Naive thymus-derived CD4-positive, alpha-beta T cell (primary cell): ENCODE measurements at regions of chr1 and their contacts with region 1.

Region 1: DNA sequence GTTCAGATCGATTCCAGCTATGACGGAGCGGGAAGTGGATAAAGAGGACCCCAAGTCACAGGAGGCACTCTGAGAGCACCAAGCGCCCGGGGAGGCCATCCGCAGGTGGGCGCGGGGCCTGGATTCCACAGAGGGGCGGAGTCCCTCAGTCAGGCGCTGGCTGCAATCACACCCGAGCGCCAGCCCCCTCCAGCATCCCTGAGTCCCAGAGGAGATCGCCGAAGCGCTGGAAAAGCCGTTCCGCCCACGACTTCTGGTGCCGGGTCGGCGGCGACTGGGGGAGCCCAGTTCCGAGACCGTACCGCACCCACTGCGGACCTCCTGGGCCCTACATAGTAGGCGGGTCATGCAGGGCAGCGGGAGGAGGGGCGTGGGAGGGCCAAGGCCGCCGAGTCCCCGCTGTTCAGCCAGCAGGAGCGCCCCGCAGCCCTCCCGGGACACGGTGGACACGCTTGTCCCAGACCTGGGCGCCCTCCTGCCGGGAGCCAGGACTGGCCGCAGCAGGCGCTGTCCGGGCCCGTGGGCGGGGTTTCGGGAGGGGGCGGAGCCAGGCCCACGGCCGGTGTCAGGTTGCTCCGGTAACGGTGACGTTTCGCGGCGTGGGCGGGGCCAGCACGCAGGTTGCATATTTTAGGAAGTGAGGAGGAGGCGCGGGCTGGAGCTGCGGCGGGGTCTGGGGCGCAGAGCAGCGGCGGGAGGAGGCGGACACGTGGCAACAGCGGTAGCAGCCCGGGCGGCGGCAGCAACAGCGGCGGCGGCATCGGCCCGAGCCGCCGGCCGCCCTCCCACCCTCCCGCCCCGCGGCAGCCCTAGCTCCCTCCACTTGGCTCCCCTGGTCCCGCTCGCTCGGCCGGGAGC is at the start of gene ATP1A1:
- DNase-seq: peak; percentile 94 to 99 (median 96)
- ATAC-seq: peak; percentile 89
- H3K4me3 ChIP-seq: peak within 1 kb of the TSS; percentile 94
- H3K4me3 Mint-ChIP-seq: peak within 1 kb of the TSS; percentile 91 to 99 (median 98)
- H3K27ac ChIP-seq: peak within 1 kb of the TSS; percentile 98
- H3K27ac Mint-ChIP-seq: peak within 1 kb of the TSS; percentile 89 to 98 (median 96)
- H3K4me1 ChIP-seq: peaks cover 18 to 20% of the 10 kb centered on the region in 2 donors
- H3K4me1 Mint-ChIP-seq: peaks cover 15 to 54% (median 35%) of the 10 kb centered on the region in 7 donors
- H3K27me3 ChIP-seq: no peaks in the 10 kb centered on the region
- H3K27me3 Mint-ChIP-seq: peaks cover 0 to 29% (median 0%) of the 10 kb centered on the region in 5 donors
- total RNA-seq, gene ATP1A1: 228 to 315 (median 287) TPM

Region 2: GRCh38 chr1:116151739-116152576 is 220.9 kb before region 1 on chr1:
- CTCF ChIA-PET with region 1: interaction called, 4 read pairs
- POLR2A ChIA-PET with region 1: interaction called, 7 read pairs
- intact Hi-C with region 1: loop called (anchors 1 to 2 kb)
- DNase-seq: peak; percentile 61 to 89 (median 76)
- ATAC-seq: peak; percentile 97
- H3K4me3 ChIP-seq: peak overlapping the region; percentile 48
- H3K4me3 Mint-ChIP-seq: peak overlapping the region; percentile 70 to 87 (median 82)
- H3K27ac ChIP-seq: peak overlapping the region; percentile 74
- H3K27ac Mint-ChIP-seq: peak overlapping the region; percentile 63 to 98 (median 92)
- H3K4me1 ChIP-seq: peaks cover 7 to 21% of the 10 kb centered on the region in 2 donors
- H3K4me1 Mint-ChIP-seq: peaks cover 9 to 32% (median 25%) of the 10 kb centered on the region in 7 donors
- H3K27me3 ChIP-seq: no peaks in the 10 kb centered on the region
- H3K27me3 Mint-ChIP-seq: peaks cover 0 to 31% (median 0%) of the 10 kb centered on the region in 5 donors

Region 3: GRCh38 chr1:116325922-116326321 is 46.9 kb before region 1 on chr1:
- CTCF ChIA-PET with region 1: interaction called, 4 read pairs
- POLR2A ChIA-PET with region 1: interaction called, 103 read pairs
- intact Hi-C with region 1: loop called (anchors 1 kb)
- DNase-seq: peak; percentile 14 to 84 (median 78)
- ATAC-seq: peak; percentile 92
- H3K4me3 ChIP-seq: peak overlapping the region; percentile 38
- H3K4me3 Mint-ChIP-seq: peak overlapping the region; percentile 25 to 83 (median 70)
- H3K27ac ChIP-seq: peak overlapping the region; percentile 73
- H3K27ac Mint-ChIP-seq: peak overlapping the region; percentile 90 to 98 (median 95)
- H3K4me1 ChIP-seq: peaks cover 48 to 88% of the 10 kb centered on the region in 2 donors
- H3K4me1 Mint-ChIP-seq: peaks cover 50 to 100% (median 93%) of the 10 kb centered on the region in 7 donors
- H3K27me3 ChIP-seq: no peaks in the 10 kb centered on the region
- H3K27me3 Mint-ChIP-seq: no peaks in the 10 kb centered on the region

Region 4: DNA sequence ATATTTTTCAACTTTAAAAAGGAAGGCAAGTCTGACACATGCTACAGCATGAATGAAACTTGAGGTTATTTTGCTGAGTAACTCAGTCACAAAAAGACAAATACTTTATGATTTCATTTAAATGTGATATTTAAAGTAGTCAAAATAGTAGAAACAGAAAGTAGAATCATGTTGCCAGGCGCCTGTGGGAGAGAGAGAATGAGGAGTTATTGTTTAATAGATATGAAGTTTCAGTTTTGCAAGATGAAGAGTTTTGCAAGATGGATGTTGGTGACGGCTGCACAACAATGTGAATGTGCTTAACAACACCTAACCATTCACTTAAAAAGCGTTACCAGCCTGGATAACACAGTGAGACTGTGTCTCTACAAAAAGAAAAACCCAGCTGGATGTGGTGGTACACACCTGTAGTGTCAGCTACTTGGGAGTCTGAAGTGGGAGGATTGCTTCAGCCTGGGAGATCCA is 20.4 kb before region 1 on chr1:
- CTCF ChIA-PET with region 1: no interaction called
- POLR2A ChIA-PET with region 1: interaction called, 19 read pairs
- intact Hi-C with region 1: loop called in 1 of 2 experiments (anchors 1 kb)
- DNase-seq: peak in 4 of 9 donors; percentile 2 to 19 (median 12)
- ATAC-seq: peak; percentile 37
- H3K4me3 ChIP-seq: no peak overlapping the region
- H3K4me3 Mint-ChIP-seq: peak overlapping the region in 8 of 10 donors; percentile 10 to 71 (median 54)
- H3K27ac ChIP-seq: no peak overlapping the region
- H3K27ac Mint-ChIP-seq: peak overlapping the region in 7 of 9 donors; percentile 6 to 82 (median 38)
- H3K4me1 ChIP-seq: peaks cover 0 to 38% of the 10 kb centered on the region in 2 donors
- H3K4me1 Mint-ChIP-seq: peaks cover 21 to 80% (median 72%) of the 10 kb centered on the region in 7 donors
- H3K27me3 ChIP-seq: no peaks in the 10 kb centered on the region
- H3K27me3 Mint-ChIP-seq: peaks cover 0 to 6% (median 0%) of the 10 kb centered on the region in 5 donors

Region 5: GRCh38 chr1:116418091-116418830 is 45.4 kb after region 1 on chr1:
- CTCF ChIA-PET with region 1: interaction called, 6 read pairs
- POLR2A ChIA-PET with region 1: interaction called, 36 read pairs
- intact Hi-C with region 1: loop called (anchors 1 kb)
- DNase-seq: peak; percentile 76 to 90 (median 88)
- ATAC-seq: peak; percentile 97
- H3K4me3 ChIP-seq: peak overlapping the region; percentile 97
- H3K4me3 Mint-ChIP-seq: peak overlapping the region; percentile 85 to 95 (median 90)
- H3K27ac ChIP-seq: peak overlapping the region; percentile 87
- H3K27ac Mint-ChIP-seq: peak overlapping the region; percentile 83 to 98 (median 95)
- H3K4me1 ChIP-seq: peaks cover 12 to 18% of the 10 kb centered on the region in 2 donors
- H3K4me1 Mint-ChIP-seq: peaks cover 22 to 52% (median 47%) of the 10 kb centered on the region in 7 donors
- H3K27me3 ChIP-seq: no peaks in the 10 kb centered on the region
- H3K27me3 Mint-ChIP-seq: peaks cover 0 to 15% (median 0%) of the 10 kb centered on the region in 5 donors

Region 6: DNA sequence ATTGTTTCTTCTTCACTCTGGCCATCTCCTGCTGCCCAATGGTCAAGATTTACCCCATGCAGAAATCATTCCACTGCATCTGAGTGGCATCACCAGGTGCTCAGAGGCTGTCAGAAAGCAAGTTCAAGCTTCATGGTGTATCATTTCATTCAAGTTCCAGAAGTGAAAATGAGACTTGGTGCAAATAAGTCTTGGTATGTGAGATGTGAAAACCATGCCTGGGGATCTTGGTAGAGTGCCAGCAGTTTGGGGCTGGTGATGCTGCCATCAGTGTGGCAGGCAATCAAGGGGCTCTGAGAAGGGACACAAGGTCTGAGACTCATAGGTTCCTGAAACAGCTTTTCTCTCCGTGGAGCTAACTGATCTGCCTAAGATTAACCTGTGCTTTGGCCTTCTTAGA is 433.4 kb after region 1 on chr1:
- CTCF ChIA-PET with region 1: no interaction called
- POLR2A ChIA-PET with region 1: no interaction called
- intact Hi-C with region 1: loop called in 1 of 2 experiments (anchors 10 kb)
- DNase-seq: peak in 2 of 9 donors; percentile 6 to 44
- ATAC-seq: peak; percentile 50
- H3K4me3 ChIP-seq: peak overlapping the region; percentile 43
- H3K4me3 Mint-ChIP-seq: peak overlapping the region in 4 of 10 donors; percentile 16 to 85 (median 44)
- H3K27ac ChIP-seq: no peak overlapping the region
- H3K27ac Mint-ChIP-seq: peak overlapping the region; percentile 12 to 92 (median 67)
- H3K4me1 ChIP-seq: peaks cover 19 to 68% of the 10 kb centered on the region in 2 donors
- H3K4me1 Mint-ChIP-seq: peaks cover 53 to 87% (median 67%) of the 10 kb centered on the region in 7 donors
- H3K27me3 ChIP-seq: no peaks in the 10 kb centered on the region
- H3K27me3 Mint-ChIP-seq: no peaks in the 10 kb centered on the region

Region 7: GRCh38 chr1:117367047-117368018 is 994.5 kb after region 1 on chr1 and contains the start of gene MAN1A2:
- CTCF ChIA-PET with region 1: no interaction called
- POLR2A ChIA-PET with region 1: no interaction called
- intact Hi-C with region 1: loop called in 1 of 2 experiments (anchors 5 kb)
- DNase-seq: peak in 7 of 9 donors; percentile 59 to 79 (median 75)
- ATAC-seq: peak; percentile 78
- H3K4me3 ChIP-seq: peak within 1 kb of the TSS; percentile 83
- H3K4me3 Mint-ChIP-seq: peak within 1 kb of the TSS; percentile 92 to 98 (median 95)
- H3K27ac ChIP-seq: peak within 1 kb of the TSS; percentile 91
- H3K27ac Mint-ChIP-seq: peak within 1 kb of the TSS; percentile 92 to 99 (median 97)
- H3K4me1 ChIP-seq: peaks cover 23 to 44% of the 10 kb centered on the region in 2 donors
- H3K4me1 Mint-ChIP-seq: peaks cover 46 to 82% (median 73%) of the 10 kb centered on the region in 7 donors
- H3K27me3 ChIP-seq: no peaks in the 10 kb centered on the region
- H3K27me3 Mint-ChIP-seq: no peaks in the 10 kb centered on the region
- total RNA-seq, gene MAN1A2: 40.4 to 63.4 (median 47.1) TPM